Activated T-helper 1 cell treated with anti-CD3 and anti-CD28 coated beads, Interleukin-12 subunit alpha, Interleukin-12 subunit beta, Interleukin-2, Interleukin-4 antibody, amounts not matched to agents 30 ng/mL and 10 ng/mL and 1 ng/mL, durations not matched to agents 14 hours and 24 hours and 36 hours (primary cell): ENCODE measurements at regions of chr18 and their contacts with region 1.

Region 1: GRCh38 chr18:77448046-77448445 is 198.4 kb downstream of the GALR1 start:
- DNase-seq: no peak
- H3K4me3 Mint-ChIP-seq: no peak overlapping the region
- H3K27ac Mint-ChIP-seq: no peak overlapping the region
- H3K4me1 Mint-ChIP-seq: no peaks in the 10 kb centered on the region
- H3K27me3 Mint-ChIP-seq: peaks cover 5% of the 10 kb centered on the region

Region 2: DNA sequence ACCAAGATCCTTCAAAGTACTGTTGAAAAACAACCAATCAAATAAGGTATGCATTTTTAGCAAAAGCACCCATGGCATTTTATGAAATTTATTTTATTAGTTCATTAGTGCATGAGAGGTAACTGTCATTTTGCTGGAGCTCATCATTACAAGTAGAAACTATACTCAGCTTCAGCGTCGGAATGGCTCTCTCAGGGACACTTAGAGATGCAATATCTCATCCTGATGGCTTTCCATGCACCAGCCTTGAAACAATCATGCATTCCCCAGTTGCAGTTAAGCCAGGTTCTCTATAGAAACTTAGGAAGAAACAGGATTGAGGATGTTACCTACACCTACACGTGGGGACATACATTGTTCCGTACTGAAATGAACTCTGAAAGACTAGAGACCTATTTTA is 21.1 kb after region 1 on chr18:
- intact Hi-C with region 1: loop called (anchors 1 kb)
- DNase-seq: no peak
- H3K4me3 Mint-ChIP-seq: no peak overlapping the region
- H3K27ac Mint-ChIP-seq: no peak overlapping the region
- H3K4me1 Mint-ChIP-seq: no peaks in the 10 kb centered on the region
- H3K27me3 Mint-ChIP-seq: peaks cover 4% of the 10 kb centered on the region

Region 3: GRCh38 chr18:77501266-77501665 is 53.2 kb after region 1 on chr18:
- intact Hi-C with region 1: no loop called
- DNase-seq: no peak
- H3K4me3 Mint-ChIP-seq: no peak overlapping the region
- H3K27ac Mint-ChIP-seq: no peak overlapping the region
- H3K4me1 Mint-ChIP-seq: no peaks in the 10 kb centered on the region
- H3K27me3 Mint-ChIP-seq: no peaks in the 10 kb centered on the region

Region 4: GRCh38 chr18:77567205-77567604 is 119.2 kb after region 1 on chr18:
- intact Hi-C with region 1: no loop called
- DNase-seq: no peak
- H3K4me3 Mint-ChIP-seq: no peak overlapping the region
- H3K27ac Mint-ChIP-seq: no peak overlapping the region
- H3K4me1 Mint-ChIP-seq: no peaks in the 10 kb centered on the region
- H3K27me3 Mint-ChIP-seq: no peaks in the 10 kb centered on the region